CD14-positive monocyte (primary cell): ENCODE measurements at regions of chr9 and their contacts with region 1.

Region 1: GRCh38 chr9:34665381-34666250 is 3.2 kb upstream of the CCL27 start:
- DNase-seq: peak; percentile 94 to 95 (median 94)
- H3K4me3 ChIP-seq: peak overlapping the region; percentile 65 to 87 (median 71)
- H3K4me3 Mint-ChIP-seq: peak overlapping the region; percentile 82 to 91
- H3K27ac ChIP-seq: peak overlapping the region; percentile 95 to 98
- H3K27ac Mint-ChIP-seq: peak overlapping the region; percentile 97 to 99 (median 99)
- H3K4me1 ChIP-seq: peaks cover 16 to 19% of the 10 kb centered on the region in 2 donors
- H3K4me1 Mint-ChIP-seq: peaks cover 26% of the 10 kb centered on the region
- H3K27me3 ChIP-seq: no peaks in the 10 kb centered on the region
- H3K27me3 Mint-ChIP-seq: peaks cover 0 to 3% (median 2%) of the 10 kb centered on the region in 3 donors
- CTCF ChIP-seq: no peak

Region 2: GRCh38 chr9:34989003-34989945 is 323.7 kb after region 1 on chr9 and contains the start of gene DNAJB5:
- intact Hi-C with region 1: loop called in 1 of 2 experiments (anchors 10 kb)
- DNase-seq: peak; percentile 99
- H3K4me3 ChIP-seq: peak within 1 kb of the TSS; percentile 71 to 86 (median 80)
- H3K4me3 Mint-ChIP-seq: peak within 1 kb of the TSS; percentile 92 to 96
- H3K27ac ChIP-seq: peak within 1 kb of the TSS; percentile 11 to 83
- H3K27ac Mint-ChIP-seq: peak within 1 kb of the TSS; percentile 79 to 97 (median 95)
- H3K4me1 ChIP-seq: peaks cover 45 to 60% of the 10 kb centered on the region in 2 donors
- H3K4me1 Mint-ChIP-seq: peaks cover 67% of the 10 kb centered on the region
- H3K27me3 ChIP-seq: peaks cover 0 to 10% of the 10 kb centered on the region in 2 donors
- H3K27me3 Mint-ChIP-seq: peaks cover 8 to 28% (median 24%) of the 10 kb centered on the region in 3 donors
- CTCF ChIP-seq: no peak
- polyA plus RNA-seq, gene DNAJB5: 0.66 to 1.9 (median 0.84) TPM